Right ventricle myocardium inferior (tissue), 1 donor: ENCODE measurements at regions of chr2 and their contacts with region 1.

Region 1: DNA sequence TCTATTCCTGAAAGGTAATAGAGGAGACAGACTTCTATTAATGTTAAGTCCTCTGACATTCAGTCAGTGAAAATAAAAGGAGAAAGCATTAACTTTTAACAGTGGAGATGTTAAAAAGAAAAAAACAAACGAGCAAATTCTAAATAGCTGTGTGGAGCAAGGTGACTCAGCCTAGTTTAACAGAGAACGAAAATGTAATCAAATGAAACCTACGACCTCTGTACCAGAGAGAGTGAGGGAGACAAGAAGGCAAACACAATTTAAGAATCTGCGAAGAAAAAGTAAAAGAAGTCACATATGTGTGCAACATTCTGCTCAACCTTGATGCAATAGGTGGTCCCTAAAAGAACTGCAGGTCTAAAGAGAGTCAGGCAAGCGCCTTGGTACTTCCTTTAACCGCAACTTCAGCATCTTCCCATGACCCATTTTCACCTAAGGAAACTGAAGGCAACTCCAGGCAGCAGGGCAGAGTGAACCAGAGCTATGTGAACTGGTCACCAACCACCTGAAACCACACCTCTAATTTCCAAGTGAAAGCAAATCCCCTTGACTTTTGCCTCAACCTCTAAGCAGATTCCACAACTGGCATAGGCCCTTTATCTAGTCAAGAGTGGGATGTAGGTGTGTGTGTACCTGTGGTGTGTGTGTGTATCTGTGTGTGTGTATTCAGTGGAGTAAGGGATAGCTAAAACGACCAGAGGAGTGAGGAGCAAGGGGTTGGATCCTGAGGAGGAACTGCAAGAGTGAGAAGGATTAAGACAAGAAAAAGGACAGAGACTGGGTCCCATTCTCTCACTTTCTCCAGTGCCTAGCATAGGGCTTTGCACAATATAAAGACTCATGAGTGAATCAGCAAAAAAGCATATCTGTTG is 43.0 kb downstream of the FIGN start:
- DNase-seq: no peak
- ATAC-seq: no peak

Region 2: GRCh38 chr2:165268754-165269153 is 1575.9 kb after region 1 on chr2:
- intact Hi-C with region 1: loop called (anchors 5 kb)
- DNase-seq: no peak
- ATAC-seq: no peak